ENCODE measurements at regions of chr15 and their contacts with region 1.

Region 1: GRCh38 chr15:58227706-58228543 is 89.7 kb downstream of the AQP9 start:
- DNase-seq: peak; percentile 65 to 87 (median 76)
- H3K4me3 ChIP-seq: no peak overlapping the region
- H3K27ac ChIP-seq: peak overlapping the region in 50 of 59 donors; percentile 46 to 96 (median 86)
- H3K27me3 ChIP-seq: no peaks in the 10 kb centered on the region
- CTCF ChIP-seq: peak; percentile 77 to 96 (median 89)

Region 2: GRCh38 chr15:58269455-58270414 is 41.8 kb after region 1 on chr15:
- intact Hi-C with region 1: loop called in 1 of 2 experiments (anchors 5 kb)
- DNase-seq: peak in 2 of 10 donors; percentile 19 to 54
- H3K4me3 ChIP-seq: no peak overlapping the region
- H3K27ac ChIP-seq: no peak overlapping the region
- H3K27me3 ChIP-seq: no peaks in the 10 kb centered on the region
- CTCF ChIP-seq: peak; percentile 30 to 83 (median 70)

Region 3: GRCh38 chr15:58401991-58402649 is 174.2 kb after region 1 on chr15:
- intact Hi-C with region 1: loop called (anchors 5 to 10 kb)
- DNase-seq: no peak
- H3K4me3 ChIP-seq: no peak overlapping the region
- H3K27ac ChIP-seq: no peak overlapping the region
- H3K27me3 ChIP-seq: no peaks in the 10 kb centered on the region
- CTCF ChIP-seq: no peak

Region 4: GRCh38 chr15:58521293-58521991 is 293.5 kb after region 1 on chr15:
- intact Hi-C with region 1: loop called in 1 of 2 experiments (anchors 10 kb)
- DNase-seq: peak in 8 of 10 donors; percentile 41 to 80 (median 64)
- H3K4me3 ChIP-seq: no peak overlapping the region
- H3K27ac ChIP-seq: peak overlapping the region; percentile 6 to 92 (median 84)
- H3K27me3 ChIP-seq: no peaks in the 10 kb centered on the region
- CTCF ChIP-seq: no peak

Region 5: DNA sequence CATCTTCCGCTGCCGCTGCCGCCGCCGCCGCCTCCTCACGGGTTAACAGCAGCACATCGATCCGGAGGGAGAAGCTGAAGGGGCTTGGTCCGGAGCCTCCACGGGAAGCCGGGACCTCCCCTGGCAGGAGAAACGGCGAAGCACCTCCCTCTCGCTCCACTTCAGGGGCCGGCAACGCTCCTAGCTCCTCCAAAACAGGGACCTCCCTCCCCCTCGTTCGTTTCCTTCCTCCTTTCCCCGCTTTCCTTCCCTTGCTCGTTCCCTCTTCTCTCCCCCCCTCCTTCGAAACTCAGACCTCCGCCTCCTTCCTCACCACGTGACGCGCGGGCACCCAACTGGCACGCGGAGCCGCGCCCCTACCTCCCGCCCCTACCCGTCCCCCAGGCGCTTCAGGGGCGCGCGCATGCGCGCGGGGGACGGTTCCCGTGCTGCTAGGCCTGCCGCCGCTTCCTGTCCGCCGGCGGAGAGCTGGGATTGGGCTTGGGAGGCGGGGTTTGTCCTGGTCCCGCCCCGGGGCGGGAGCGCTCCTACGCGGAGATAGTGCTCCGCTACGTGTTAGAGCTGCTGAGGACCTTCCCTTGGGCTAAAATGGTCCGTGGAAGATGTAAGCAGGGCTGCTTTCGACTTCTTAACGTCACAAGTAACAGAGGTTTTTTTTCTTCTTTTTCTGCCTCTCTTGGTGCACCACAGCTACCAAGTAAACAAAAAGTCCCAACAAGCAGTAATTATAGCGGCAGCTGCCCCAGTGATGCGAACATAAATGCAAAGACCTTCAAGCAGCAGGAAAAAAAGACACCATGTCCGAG is 521.8 kb after region 1 on chr15 and contains the start of gene ADAM10:
- intact Hi-C with region 1: loop called in 1 of 2 experiments (anchors 5 kb)
- DNase-seq: peak; percentile 96 to 100 (median 99)
- H3K4me3 ChIP-seq: peak within 1 kb of the TSS; percentile 67 to 98 (median 88)
- H3K27ac ChIP-seq: peak within 1 kb of the TSS; percentile 90 to 100 (median 97)
- H3K27me3 ChIP-seq: no peaks in the 10 kb centered on the region
- CTCF ChIP-seq: peak in 19 of 56 donors; percentile 1 to 54 (median 24)
- total RNA-seq, gene ADAM10: 85.4 to 177 (median 116) TPM

Region 6: DNA sequence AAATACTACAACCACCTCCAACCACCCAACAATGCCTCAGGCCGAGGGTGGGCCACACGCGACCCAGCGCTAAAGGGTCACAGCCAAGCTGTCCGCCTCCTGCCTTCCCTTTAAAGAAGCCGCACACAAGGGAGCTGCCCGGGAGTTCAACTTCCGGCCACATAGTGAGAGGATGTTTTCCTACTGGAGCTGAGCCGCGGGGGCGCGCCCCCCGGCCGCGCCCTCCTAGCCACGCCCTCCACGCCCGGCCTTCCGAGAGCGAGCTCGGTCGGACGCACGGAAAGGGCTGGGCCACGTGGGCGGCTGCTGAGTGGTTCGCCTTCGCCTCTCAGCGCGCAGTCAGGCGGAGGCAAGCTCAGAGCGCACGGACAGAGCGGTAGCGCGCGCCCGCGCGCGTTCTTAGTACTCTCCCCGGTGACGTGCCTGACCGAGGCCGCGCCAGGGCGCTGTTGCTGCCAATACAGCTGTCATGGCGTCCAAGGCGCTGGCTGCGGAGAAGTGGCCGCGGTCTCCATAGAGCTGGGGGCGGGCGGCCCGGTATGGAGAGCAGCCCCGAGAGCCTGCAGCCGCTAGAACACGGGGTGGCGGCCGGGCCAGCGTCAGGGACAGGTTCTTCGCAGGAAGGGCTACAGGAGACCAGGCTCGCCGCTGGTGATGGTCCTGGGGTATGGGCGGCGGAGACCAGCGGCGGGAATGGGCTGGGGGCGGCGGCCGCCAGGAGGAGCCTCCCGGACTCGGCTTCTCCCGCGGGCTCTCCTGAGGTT is 543.1 kb after region 1 on chr15 and contains the start of gene MINDY2:
- intact Hi-C with region 1: loop called in 1 of 2 experiments (anchors 5 kb)
- DNase-seq: peak; percentile 96 to 99 (median 98)
- H3K4me3 ChIP-seq: peak within 1 kb of the TSS; percentile 67 to 99 (median 95)
- H3K27ac ChIP-seq: peak within 1 kb of the TSS; percentile 91 to 100 (median 99)
- H3K27me3 ChIP-seq: no peaks in the 10 kb centered on the region
- CTCF ChIP-seq: peak in 47 of 56 donors; percentile 4 to 68 (median 35)
- total RNA-seq, gene MINDY2: 28.6 to 56.4 (median 40.0) TPM